T-cell (primary cell): ENCODE measurements at regions of chr15 and their contacts with region 1.

Region 1: GRCh38 chr15:79923515-79924395 is 26.9 kb upstream of the MTHFS start:
- DNase-seq: peak; percentile 92 to 100 (median 97)
- ATAC-seq: peak; percentile 92 to 96 (median 94)
- H3K4me3 ChIP-seq: peak overlapping the region; percentile 86 to 96
- H3K4me3 Mint-ChIP-seq: peak overlapping the region; percentile 91 to 98 (median 92)
- H3K27ac ChIP-seq: peak overlapping the region; percentile 97
- H3K27ac Mint-ChIP-seq: peak overlapping the region; percentile 96 to 97
- H3K4me1 ChIP-seq: peaks cover 4 to 24% of the 10 kb centered on the region in 2 experiments
- H3K4me1 Mint-ChIP-seq: peaks cover 16 to 27% (median 22%) of the 10 kb centered on the region in 3 donors
- H3K27me3 ChIP-seq: no peaks in the 10 kb centered on the region
- H3K27me3 Mint-ChIP-seq: no peaks in the 10 kb centered on the region

Region 2: GRCh38 chr15:79896637-79897379 is 26.9 kb before region 1 on chr15 and contains the start of gene MTHFS:
- CTCF ChIA-PET with region 1: interaction called, 3 to 11 read pairs
- POLR2A ChIA-PET with region 1: interaction called, 5 to 19 read pairs
- DNase-seq: peak; percentile 65 to 88 (median 78)
- ATAC-seq: peak; percentile 87 to 91 (median 88)
- H3K4me3 ChIP-seq: peak within 1 kb of the TSS; percentile 82 to 84
- H3K4me3 Mint-ChIP-seq: peak within 1 kb of the TSS; percentile 84 to 96 (median 96)
- H3K27ac ChIP-seq: peak within 1 kb of the TSS; percentile 89
- H3K27ac Mint-ChIP-seq: peak within 1 kb of the TSS; percentile 99 to 100
- H3K4me1 ChIP-seq: peaks cover 11 to 20% of the 10 kb centered on the region in 2 experiments
- H3K4me1 Mint-ChIP-seq: peaks cover 37 to 48% (median 40%) of the 10 kb centered on the region in 3 donors
- H3K27me3 ChIP-seq: no peaks in the 10 kb centered on the region
- H3K27me3 Mint-ChIP-seq: no peaks in the 10 kb centered on the region
- total RNA-seq, gene MTHFS: 13.2 to 31.6 (median 27.3) TPM

Region 3: GRCh38 chr15:79962178-79962577 is 38.4 kb after region 1 on chr15:
- CTCF ChIA-PET with region 1: interaction called, 3 to 13 read pairs
- POLR2A ChIA-PET with region 1: no interaction called
- DNase-seq: no peak
- ATAC-seq: no peak
- H3K4me3 ChIP-seq: no peak overlapping the region
- H3K4me3 Mint-ChIP-seq: no peak overlapping the region
- H3K27ac ChIP-seq: no peak overlapping the region
- H3K27ac Mint-ChIP-seq: no peak overlapping the region
- H3K4me1 ChIP-seq: peaks cover 2 to 8% of the 10 kb centered on the region in 2 experiments
- H3K4me1 Mint-ChIP-seq: peaks cover 30 to 38% (median 30%) of the 10 kb centered on the region in 3 donors
- H3K27me3 ChIP-seq: no peaks in the 10 kb centered on the region
- H3K27me3 Mint-ChIP-seq: no peaks in the 10 kb centered on the region